HepG2 (cell line): ENCODE measurements at regions of chr15 and their contacts with region 1.

Region 1: GRCh38 chr15:45714590-45715488 is 80.0 kb downstream of the SQOR start:
- DNase-seq: peak; percentile 51
- ATAC-seq: peak; percentile 85
- H3K4me3 ChIP-seq: no peak overlapping the region
- H3K27ac ChIP-seq: no peak overlapping the region
- H3K4me1 ChIP-seq: peaks cover 7% of the 10 kb centered on the region
- H3K27me3 ChIP-seq: no peaks in the 10 kb centered on the region
- CTCF ChIP-seq: peak; percentile 93
- EP300 ChIP-seq: no peak
- POLR2A ChIP-seq: no peak
- RAD21 ChIP-seq: peak; percentile 30; the same call in 1 of the 2 replicates

Region 2: GRCh38 chr15:45780352-45780751 is 65.5 kb after region 1 on chr15:
- CTCF ChIA-PET with region 1: no interaction called
- POLR2A ChIA-PET with region 1: no interaction called
- in situ Hi-C with region 1: loop called (anchors 5 kb)
- intact Hi-C with region 1: no loop called
- DNase-seq: no peak
- ATAC-seq: peak; percentile 43; the same call in 1 of the 3 replicates
- H3K4me3 ChIP-seq: no peak overlapping the region
- H3K27ac ChIP-seq: no peak overlapping the region
- H3K4me1 ChIP-seq: peaks cover 9% of the 10 kb centered on the region
- H3K27me3 ChIP-seq: no peaks in the 10 kb centered on the region
- CTCF ChIP-seq: no peak
- EP300 ChIP-seq: no peak
- POLR2A ChIP-seq: no peak
- RAD21 ChIP-seq: no peak

Region 3: DNA sequence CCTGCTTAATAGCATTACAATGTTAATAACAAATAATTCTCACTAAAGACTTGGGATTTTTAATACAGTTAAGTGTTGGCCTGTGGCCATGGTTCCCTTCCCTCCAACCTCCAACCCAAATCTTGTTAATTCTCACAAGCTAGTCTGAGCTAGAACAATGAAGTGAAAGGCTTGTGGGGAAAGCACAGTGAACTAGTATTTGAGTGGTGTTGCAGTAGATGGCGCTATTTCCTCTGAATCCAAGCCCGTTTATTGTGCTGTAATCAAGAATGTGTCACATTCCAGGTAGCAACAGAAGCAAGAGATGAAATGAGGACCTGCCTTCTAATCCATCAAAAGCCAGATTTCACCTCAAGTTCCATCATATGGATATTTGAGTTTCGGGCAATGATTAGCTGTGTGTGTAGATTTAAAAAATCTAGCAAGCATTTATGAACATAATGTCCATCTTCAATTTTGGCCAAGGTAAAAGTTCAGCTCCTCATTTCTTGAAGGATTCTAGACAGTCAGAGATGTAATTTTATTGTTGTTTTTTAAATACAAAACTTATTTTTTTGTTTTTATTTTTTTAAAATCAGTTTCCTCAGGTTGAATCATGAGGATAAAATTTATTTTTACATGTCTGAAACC is 80.7 kb after region 1 on chr15:
- CTCF ChIA-PET with region 1: interaction called, 3 read pairs
- POLR2A ChIA-PET with region 1: no interaction called
- in situ Hi-C with region 1: no loop called
- intact Hi-C with region 1: loop called (anchors 1 kb)
- DNase-seq: peak; percentile 52
- ATAC-seq: peak; percentile 83
- H3K4me3 ChIP-seq: peak overlapping the region in 2 of 3 experiments; percentile 16 to 32; a peak in 1 of 6 replicates
- H3K27ac ChIP-seq: no peak overlapping the region
- H3K4me1 ChIP-seq: peaks cover 35% of the 10 kb centered on the region
- H3K27me3 ChIP-seq: no peaks in the 10 kb centered on the region
- CTCF ChIP-seq: peak; percentile 80
- EP300 ChIP-seq: no peak
- POLR2A ChIP-seq: no peak
- RAD21 ChIP-seq: no peak; the same call in 1 of the 2 replicates

Region 4: GRCh38 chr15:45863876-45864580 is 149.2 kb after region 1 on chr15:
- CTCF ChIA-PET with region 1: no interaction called
- POLR2A ChIA-PET with region 1: no interaction called
- in situ Hi-C with region 1: no loop called
- intact Hi-C with region 1: no loop called
- DNase-seq: no peak
- ATAC-seq: no peak
- H3K4me3 ChIP-seq: no peak overlapping the region
- H3K27ac ChIP-seq: no peak overlapping the region
- H3K4me1 ChIP-seq: no peaks in the 10 kb centered on the region
- H3K27me3 ChIP-seq: no peaks in the 10 kb centered on the region
- CTCF ChIP-seq: no peak
- EP300 ChIP-seq: no peak
- POLR2A ChIP-seq: no peak
- RAD21 ChIP-seq: no peak